ENCODE measurements at regions of chr16 and their contacts with region 1.

Region 1: GRCh38 chr16:84277237-84277823 is 17.3 kb upstream of the WFDC1 start:
- DNase-seq: peak; percentile 73 to 89 (median 88)
- ATAC-seq: peak; percentile 68 to 70
- H3K4me3 ChIP-seq: no peak overlapping the region
- H3K27ac ChIP-seq: no peak overlapping the region
- H3K4me1 ChIP-seq: no peaks in the 10 kb centered on the region
- H3K27me3 ChIP-seq: no peaks in the 10 kb centered on the region

Region 2: GRCh38 chr16:83980794-83981193 is 296.5 kb before region 1 on chr16:
- intact Hi-C with region 1: no loop called
- DNase-seq: peak in 1 of 3 donors; percentile 20
- ATAC-seq: no peak
- H3K4me3 ChIP-seq: no peak overlapping the region
- H3K27ac ChIP-seq: no peak overlapping the region
- H3K4me1 ChIP-seq: no peaks in the 10 kb centered on the region
- H3K27me3 ChIP-seq: no peaks in the 10 kb centered on the region

Region 3: GRCh38 chr16:84357191-84357651 is 79.9 kb after region 1 on chr16:
- intact Hi-C with region 1: no loop called
- DNase-seq: no peak
- ATAC-seq: no peak
- H3K4me3 ChIP-seq: no peak overlapping the region
- H3K27ac ChIP-seq: no peak overlapping the region
- H3K4me1 ChIP-seq: no peaks in the 10 kb centered on the region
- H3K27me3 ChIP-seq: no peaks in the 10 kb centered on the region

Region 4: GRCh38 chr16:84484579-84485254 is 207.4 kb after region 1 on chr16:
- intact Hi-C with region 1: loop called (anchors 2 to 5 kb)
- DNase-seq: peak; percentile 57 to 85 (median 83)
- ATAC-seq: peak; percentile 73 to 85
- H3K4me3 ChIP-seq: no peak overlapping the region
- H3K27ac ChIP-seq: no peak overlapping the region
- H3K4me1 ChIP-seq: no peaks in the 10 kb centered on the region
- H3K27me3 ChIP-seq: no peaks in the 10 kb centered on the region

Measured in right cardiac atrium (tissue), 5 donors.